Endothelial cell of umbilical vein (primary cell): ENCODE measurements at regions of chr17 and their contacts with region 1.

Region 1: DNA sequence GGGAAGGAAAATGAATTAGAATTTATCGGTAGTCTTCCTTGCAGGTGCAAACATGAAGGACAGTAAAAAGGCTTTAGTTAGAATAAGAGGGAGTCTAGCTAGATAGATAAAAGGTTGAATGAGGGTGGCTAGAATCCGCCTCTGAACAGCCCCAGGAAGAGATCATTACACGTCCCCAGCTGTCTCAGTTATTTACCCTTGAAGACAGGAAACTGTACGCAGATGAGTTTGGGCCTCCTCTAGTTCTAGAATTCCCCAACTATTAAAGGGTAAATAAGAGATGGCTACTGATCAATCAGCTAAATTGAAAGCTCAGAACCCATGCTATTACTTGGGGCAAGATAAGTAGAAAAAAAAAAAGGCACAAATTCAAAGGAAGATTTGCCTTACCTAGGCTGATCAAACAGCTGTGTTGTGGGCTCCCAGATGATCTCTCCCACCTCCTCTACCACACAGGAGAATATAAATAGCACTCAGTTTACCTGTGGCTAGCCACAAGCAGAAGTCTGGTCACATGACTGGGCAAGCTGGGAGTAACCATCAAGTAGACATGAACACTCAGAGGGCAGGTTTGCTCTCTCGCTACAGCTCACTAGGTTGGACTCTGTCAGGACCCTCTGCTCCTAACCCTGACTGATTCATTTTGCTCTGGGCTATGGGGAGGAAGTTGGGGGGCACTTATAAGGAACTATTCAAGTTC is 17.0 kb downstream of the FAM117A start:
- DNase-seq: no peak
- H3K4me3 ChIP-seq: no peak overlapping the region
- H3K27ac ChIP-seq: no peak overlapping the region
- H3K4me1 ChIP-seq: no peaks in the 10 kb centered on the region
- H3K27me3 ChIP-seq: no peaks in the 10 kb centered on the region
- CTCF ChIP-seq: no peak
- POLR2A ChIP-seq: no peak

Region 2: DNA sequence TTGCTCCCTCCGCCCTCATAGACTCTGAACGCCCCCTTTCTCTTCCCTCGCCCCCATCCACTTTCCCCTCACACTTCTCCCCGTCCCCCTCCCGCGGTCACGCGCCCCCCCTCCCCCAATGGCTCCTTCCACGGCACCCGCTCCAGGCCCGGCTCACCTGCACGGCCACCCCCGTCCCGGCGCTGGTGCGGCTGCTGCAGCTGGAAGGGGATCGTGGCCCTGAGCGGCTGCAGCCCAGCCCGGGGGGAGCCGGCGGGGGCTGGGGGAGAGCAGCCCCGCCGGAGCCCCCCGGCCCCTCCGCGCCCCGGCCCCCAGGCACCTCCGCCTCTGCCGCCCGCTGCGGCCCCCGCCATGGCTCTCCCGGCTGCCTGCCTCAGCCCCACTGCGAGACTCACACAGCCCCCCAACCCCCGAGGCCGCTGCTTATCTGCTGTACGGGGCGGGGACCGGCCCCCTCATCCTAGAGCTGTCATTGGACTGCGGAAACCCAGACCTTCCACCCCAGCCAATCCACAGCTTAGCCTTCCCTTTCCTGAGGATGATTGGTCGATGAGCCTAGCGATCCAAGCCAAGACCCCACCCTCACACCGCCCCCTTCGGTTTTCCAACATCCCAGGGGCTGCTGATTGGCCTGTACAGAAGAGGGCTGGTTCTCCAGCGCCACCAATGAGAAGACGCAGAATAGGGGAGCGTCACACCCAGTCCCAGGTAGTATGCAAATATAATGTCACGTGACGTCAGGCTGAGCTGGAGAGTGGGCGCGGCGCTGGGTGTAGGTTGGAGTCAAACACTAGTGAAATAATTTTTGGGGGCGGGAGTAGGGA is 17.0 kb after region 1 on chr17 and contains the start of gene FAM117A:
- CTCF ChIA-PET with region 1: interaction called, 10 read pairs
- POLR2A ChIA-PET with region 1: interaction called, 8 read pairs
- dilution Hi-C with region 1: no loop called
- intact Hi-C with region 1: no loop called
- DNase-seq: peak; percentile 99
- H3K4me3 ChIP-seq: peak within 1 kb of the TSS; percentile 63 to 86 (median 67)
- H3K27ac ChIP-seq: no peak within 1 kb of the TSS
- H3K4me1 ChIP-seq: peaks cover 14% of the 10 kb centered on the region
- H3K27me3 ChIP-seq: peaks cover 15 to 42% of the 10 kb centered on the region in 2 experiments
- CTCF ChIP-seq: no peak
- POLR2A ChIP-seq: peak; percentile 54
- total RNA-seq, gene FAM117A: 10.4 and 12.2 TPM in 2 replicates